Activated CD4-positive, alpha-beta memory T cell treated with anti-CD3 and anti-CD28 coated beads, Interleukin-2, amount 10 ng/mL, durations not matched to agents 7 days and 5 days (primary cell): ENCODE measurements at regions of chr16 and their contacts with region 1.

Region 1: DNA sequence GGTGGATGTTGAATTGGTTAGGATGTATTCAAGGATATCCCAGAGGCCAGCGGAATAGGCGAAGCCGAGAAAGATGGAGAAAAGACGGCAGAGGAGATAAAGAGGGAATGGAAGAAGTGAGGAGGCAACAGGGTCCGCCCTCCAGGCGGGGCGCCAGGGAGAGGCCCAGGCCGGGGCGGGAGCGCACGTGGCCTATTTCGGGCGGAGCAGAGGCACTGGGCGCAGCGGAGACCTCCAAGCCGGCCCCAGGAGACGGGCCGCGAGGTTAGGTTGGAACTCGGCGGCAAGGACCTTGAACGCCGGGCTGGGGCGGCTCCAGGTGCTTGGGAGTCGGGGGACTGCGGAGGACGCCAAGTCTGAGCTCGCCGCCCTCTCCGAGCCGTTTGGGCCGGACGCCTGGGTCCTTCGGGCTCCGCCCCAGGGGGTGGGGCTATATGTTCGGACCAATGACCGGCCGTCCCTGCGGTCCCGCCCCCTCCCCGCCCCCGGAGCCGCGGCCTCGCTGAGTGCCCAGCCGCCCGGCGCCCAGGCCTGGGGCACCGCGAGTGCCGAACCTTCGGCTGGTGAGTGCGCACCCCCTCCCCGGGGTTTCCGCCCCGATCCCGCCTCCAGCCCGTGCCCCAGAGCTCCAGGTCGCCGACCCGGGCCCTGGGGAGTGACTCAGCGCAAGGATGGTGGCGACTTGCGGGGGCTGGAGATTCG is at the start of gene ZNF771:
- DNase-seq: peak; percentile 92
- H3K4me3 Mint-ChIP-seq: peak within 1 kb of the TSS; percentile 89
- H3K27ac Mint-ChIP-seq: peak within 1 kb of the TSS; percentile 79
- H3K4me1 Mint-ChIP-seq: peaks cover 37% of the 10 kb centered on the region
- H3K27me3 Mint-ChIP-seq: peaks cover 3% of the 10 kb centered on the region
- total RNA-seq, gene ZNF771: 4.2 to 4.5 TPM

Region 2: GRCh38 chr16:30395155-30395991 is 11.9 kb before region 1 on chr16 and contains the start of gene ZNF48:
- CTCF ChIA-PET with region 1: interaction called, 10 read pairs
- POLR2A ChIA-PET with region 1: interaction called, 23 read pairs
- DNase-seq: peak; percentile 59
- H3K4me3 Mint-ChIP-seq: peak within 1 kb of the TSS; percentile 84
- H3K27ac Mint-ChIP-seq: peak within 1 kb of the TSS; percentile 63
- H3K4me1 Mint-ChIP-seq: peaks cover 37% of the 10 kb centered on the region
- H3K27me3 Mint-ChIP-seq: no peaks in the 10 kb centered on the region
- total RNA-seq, gene ZNF48: 14.2 to 14.5 TPM

Region 3: GRCh38 chr16:30417529-30418349 is 10.5 kb after region 1 on chr16:
- CTCF ChIA-PET with region 1: interaction called, 33 read pairs
- POLR2A ChIA-PET with region 1: interaction called, 33 read pairs
- DNase-seq: peak; percentile 92
- H3K4me3 Mint-ChIP-seq: peak overlapping the region; percentile 60
- H3K27ac Mint-ChIP-seq: peak overlapping the region; percentile 64
- H3K4me1 Mint-ChIP-seq: peaks cover 41% of the 10 kb centered on the region
- H3K27me3 Mint-ChIP-seq: no peaks in the 10 kb centered on the region

Region 4: GRCh38 chr16:30437486-30438046 is 30.3 kb after region 1 on chr16:
- CTCF ChIA-PET with region 1: no interaction called
- POLR2A ChIA-PET with region 1: no interaction called
- DNase-seq: no peak
- H3K4me3 Mint-ChIP-seq: no peak overlapping the region
- H3K27ac Mint-ChIP-seq: no peak overlapping the region
- H3K4me1 Mint-ChIP-seq: peaks cover 20% of the 10 kb centered on the region
- H3K27me3 Mint-ChIP-seq: no peaks in the 10 kb centered on the region

Region 5: GRCh38 chr16:30491744-30492308 is 84.6 kb after region 1 on chr16:
- CTCF ChIA-PET with region 1: no interaction called
- POLR2A ChIA-PET with region 1: no interaction called
- DNase-seq: peak; percentile 44
- H3K4me3 Mint-ChIP-seq: no peak overlapping the region
- H3K27ac Mint-ChIP-seq: peak overlapping the region; percentile 66
- H3K4me1 Mint-ChIP-seq: peaks cover 47% of the 10 kb centered on the region
- H3K27me3 Mint-ChIP-seq: no peaks in the 10 kb centered on the region

Region 6: DNA sequence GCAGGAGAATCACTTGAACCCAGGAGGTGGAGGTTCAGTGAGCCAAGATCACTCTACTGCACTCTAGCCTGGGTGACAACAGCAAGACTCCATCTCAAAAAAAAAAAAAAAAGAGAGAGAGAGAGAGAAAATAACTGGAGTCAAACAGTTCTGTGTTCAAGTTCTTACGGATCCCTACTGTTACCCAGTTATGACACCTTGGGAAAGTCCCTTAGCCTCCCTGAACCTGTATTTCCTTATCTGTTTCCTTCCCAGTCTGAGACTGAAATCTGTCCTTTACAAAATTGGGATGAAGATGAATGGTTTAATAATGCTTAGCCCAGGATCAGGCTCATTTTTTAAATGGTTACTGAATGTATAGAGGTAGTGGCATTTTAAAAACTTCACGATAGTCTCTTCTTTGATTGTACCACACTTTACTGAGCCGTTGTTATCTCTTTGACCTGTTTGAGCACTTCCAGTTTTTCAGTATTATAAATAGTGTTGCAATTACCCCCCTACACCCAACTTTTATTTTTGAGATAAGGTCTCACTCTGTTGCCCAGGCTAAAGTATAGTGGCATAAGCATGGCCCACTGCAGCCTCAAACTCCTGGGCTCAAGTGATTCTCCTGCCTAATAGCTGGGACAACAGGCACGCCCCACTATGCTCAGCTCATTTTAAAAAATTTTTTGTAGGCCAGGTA is 102.0 kb after region 1 on chr16:
- CTCF ChIA-PET with region 1: no interaction called
- POLR2A ChIA-PET with region 1: no interaction called
- DNase-seq: no peak
- H3K4me3 Mint-ChIP-seq: no peak overlapping the region
- H3K27ac Mint-ChIP-seq: peak overlapping the region; percentile 19
- H3K4me1 Mint-ChIP-seq: peaks cover 9% of the 10 kb centered on the region
- H3K27me3 Mint-ChIP-seq: no peaks in the 10 kb centered on the region